Sigmoid colon (tissue), 7 donors: ENCODE measurements at regions of chr4 and their contacts with region 1.

Region 1: DNA sequence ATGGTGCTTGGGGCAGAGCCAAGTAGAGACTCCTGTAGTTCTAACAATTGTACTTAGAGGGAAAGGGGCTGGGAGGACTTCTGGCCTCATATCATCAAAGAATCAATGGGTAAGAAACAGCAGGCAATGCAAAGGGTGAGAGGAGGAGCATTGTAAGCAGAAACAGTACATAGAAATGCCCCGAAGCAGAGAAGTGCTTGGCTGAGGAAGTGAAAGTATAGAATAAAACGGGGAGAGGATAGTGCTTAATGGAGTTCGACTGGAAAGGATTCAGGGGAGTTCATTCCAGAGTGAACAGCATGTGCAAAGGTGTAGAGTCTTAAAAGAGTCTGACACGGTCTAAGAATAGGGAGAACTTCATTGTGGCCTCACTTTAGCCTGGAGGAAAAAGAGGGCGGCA is 103.0 kb downstream of the SYNPO2 start:
- DNase-seq: no peak
- H3K4me3 ChIP-seq: peak overlapping the region in 1 of 4 donors; percentile 7
- H3K27ac ChIP-seq: peak overlapping the region; percentile 84 to 90 (median 87)
- H3K4me1 ChIP-seq: peaks cover 0 to 100% (median 79%) of the 10 kb centered on the region in 4 donors
- H3K27me3 ChIP-seq: no peaks in the 10 kb centered on the region
- CTCF ChIP-seq: no peak
- EP300 ChIP-seq: no peak
- POLR2A ChIP-seq: no peak

Region 2: GRCh38 chr4:118586357-118586790 is 405.3 kb before region 1 on chr4:
- intact Hi-C with region 1: no loop called
- DNase-seq: peak; percentile 77
- H3K4me3 ChIP-seq: no peak overlapping the region
- H3K27ac ChIP-seq: peak overlapping the region in 3 of 4 donors; percentile 35 to 45 (median 44)
- H3K4me1 ChIP-seq: no peaks in the 10 kb centered on the region
- H3K27me3 ChIP-seq: peaks cover 0 to 18% (median 0%) of the 10 kb centered on the region in 3 donors
- CTCF ChIP-seq: no peak
- EP300 ChIP-seq: no peak
- POLR2A ChIP-seq: no peak

Region 3: DNA sequence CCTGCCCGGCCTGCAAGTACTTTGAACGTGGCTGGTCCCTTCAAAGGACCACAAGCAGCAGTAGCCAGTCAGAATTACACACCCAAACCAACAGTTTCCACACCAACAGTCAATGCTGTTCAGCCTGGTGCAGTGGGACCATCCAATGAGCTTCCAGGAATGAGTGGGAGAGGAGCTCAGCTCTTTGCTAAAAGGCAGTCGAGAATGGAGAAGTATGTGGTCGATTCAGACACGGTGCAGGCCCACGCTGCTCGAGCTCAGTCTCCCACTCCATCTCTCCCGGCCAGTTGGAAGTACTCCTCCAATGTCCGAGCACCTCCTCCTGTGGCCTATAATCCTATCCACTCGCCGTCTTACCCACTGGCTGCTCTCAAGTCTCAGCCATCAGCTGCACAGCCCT is 39.5 kb after region 1 on chr4:
- intact Hi-C with region 1: loop called (anchors 2 kb)
- DNase-seq: no peak
- H3K4me3 ChIP-seq: peak overlapping the region; percentile 39 to 55 (median 50)
- H3K27ac ChIP-seq: peak overlapping the region; percentile 84 to 98 (median 94)
- H3K4me1 ChIP-seq: peaks cover 0 to 40% (median 28%) of the 10 kb centered on the region in 4 donors
- H3K27me3 ChIP-seq: no peaks in the 10 kb centered on the region
- CTCF ChIP-seq: no peak
- EP300 ChIP-seq: no peak
- POLR2A ChIP-seq: peak in 1 of 2 donors; percentile 42

Region 4: GRCh38 chr4:119113033-119113655 is 121.5 kb after region 1 on chr4:
- intact Hi-C with region 1: no loop called
- DNase-seq: no peak
- H3K4me3 ChIP-seq: no peak overlapping the region
- H3K27ac ChIP-seq: peak overlapping the region in 3 of 4 donors; percentile 2 to 50 (median 44)
- H3K4me1 ChIP-seq: peaks cover 0 to 5% (median 1%) of the 10 kb centered on the region in 4 donors
- H3K27me3 ChIP-seq: no peaks in the 10 kb centered on the region
- CTCF ChIP-seq: no peak
- EP300 ChIP-seq: peak in 1 of 4 donors; percentile 15
- POLR2A ChIP-seq: no peak